Posterior cingulate gyrus (tissue), 11 donors: ENCODE measurements at regions of chr11 and their contacts with region 1.

Region 1: GRCh38 chr11:67498544-67498972 is 6.6 kb downstream of the PITPNM1 start:
- DNase-seq: peak in 1 of 10 donors; percentile 65

Region 2: DNA sequence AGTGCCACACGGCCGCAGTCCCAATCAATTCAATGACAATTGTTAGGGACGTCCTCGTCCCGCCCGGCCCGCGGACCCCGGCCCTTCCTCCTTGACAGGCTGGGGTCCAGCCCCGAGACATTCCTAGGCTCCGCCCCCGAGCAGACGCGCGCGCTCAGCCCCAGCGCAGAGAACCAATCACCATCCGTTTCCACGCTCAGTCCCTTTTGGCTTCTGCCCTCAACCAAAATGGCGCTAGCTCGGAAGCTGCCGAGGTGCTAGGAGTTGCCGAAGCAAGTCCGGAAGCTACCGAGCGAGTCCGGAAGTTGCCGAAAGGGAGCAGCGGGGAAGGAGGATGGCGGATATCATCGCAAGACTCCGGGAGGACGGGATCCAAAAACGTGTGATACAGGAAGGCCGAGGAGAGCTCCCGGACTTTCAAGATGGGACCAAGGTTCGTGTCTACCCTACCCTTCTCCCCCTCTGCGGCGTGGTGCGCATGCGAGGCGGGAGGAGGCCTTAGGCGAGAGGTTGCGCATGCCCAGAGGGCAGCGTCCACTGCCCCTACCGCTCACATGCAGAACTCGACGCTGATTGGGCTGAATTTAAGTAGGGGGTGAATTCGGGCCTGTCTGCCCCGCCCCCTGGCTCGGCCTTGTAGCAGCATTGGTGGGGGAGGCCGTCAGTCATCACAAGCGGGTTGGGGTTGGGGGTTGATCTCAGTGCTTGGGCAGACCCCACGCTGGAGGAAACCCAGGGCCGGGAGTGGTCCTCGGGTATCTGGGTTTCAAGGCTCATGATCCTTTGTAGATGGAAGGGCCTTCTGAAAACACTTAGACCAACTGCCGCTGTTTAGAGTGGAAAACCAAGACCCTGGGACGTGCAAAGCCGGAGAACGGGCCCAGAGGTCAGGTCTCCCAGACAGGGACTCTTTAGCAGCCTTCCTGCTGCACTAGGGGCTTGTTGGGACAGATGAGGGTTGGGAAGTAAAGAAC is 15.4 kb before region 1 on chr11 and contains the start of gene AIP:
- intact Hi-C with region 1: loop called (anchors 2 kb)
- DNase-seq: peak; percentile 92 to 99 (median 96)

Region 3: DNA sequence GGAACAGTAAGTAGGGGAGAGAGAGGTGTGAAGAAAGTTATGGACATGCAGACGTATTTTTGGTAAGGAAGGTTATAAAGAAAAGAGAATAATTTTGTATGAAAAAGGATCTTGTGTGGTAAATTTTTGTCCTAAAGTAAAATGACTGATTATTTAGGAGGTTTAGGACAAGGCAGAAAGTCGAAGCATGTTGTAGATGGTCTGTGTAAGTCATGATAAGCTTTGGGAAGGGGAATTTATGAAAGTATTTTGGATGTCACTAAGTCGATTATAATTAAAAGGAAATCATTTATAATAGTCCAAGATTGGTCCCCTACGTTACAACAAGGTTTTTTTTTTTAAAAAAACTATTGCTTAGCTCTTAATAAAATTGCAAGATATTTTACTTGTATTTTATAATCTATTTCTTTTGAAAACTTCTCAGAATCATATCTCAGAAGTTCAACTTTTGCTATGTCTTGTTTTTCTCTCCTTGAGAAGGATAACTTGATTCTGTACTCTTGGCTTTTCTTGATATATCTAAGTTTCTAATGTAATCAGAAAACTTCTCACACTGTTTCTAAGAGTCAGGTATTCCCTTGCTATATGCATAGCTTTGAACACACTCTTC is 35.6 kb after region 1 on chr11:
- intact Hi-C with region 1: no loop called
- DNase-seq: no peak